MCF 10A (cell line): ENCODE measurements at regions of chrX and their contacts with region 1.

Region 1: GRCh38 chrX:76172325-76172893 is 453 bp upstream of the PBDC1 start:
- DNase-seq: no peak
- H3K4me3 Mint-ChIP-seq: peak overlapping the region; percentile 83
- H3K27ac Mint-ChIP-seq: peak overlapping the region; percentile 90
- H3K4me1 Mint-ChIP-seq: peaks cover 7% of the 10 kb centered on the region
- H3K27me3 Mint-ChIP-seq: no peaks in the 10 kb centered on the region
- CTCF ChIP-seq: no peak

Region 2: DNA sequence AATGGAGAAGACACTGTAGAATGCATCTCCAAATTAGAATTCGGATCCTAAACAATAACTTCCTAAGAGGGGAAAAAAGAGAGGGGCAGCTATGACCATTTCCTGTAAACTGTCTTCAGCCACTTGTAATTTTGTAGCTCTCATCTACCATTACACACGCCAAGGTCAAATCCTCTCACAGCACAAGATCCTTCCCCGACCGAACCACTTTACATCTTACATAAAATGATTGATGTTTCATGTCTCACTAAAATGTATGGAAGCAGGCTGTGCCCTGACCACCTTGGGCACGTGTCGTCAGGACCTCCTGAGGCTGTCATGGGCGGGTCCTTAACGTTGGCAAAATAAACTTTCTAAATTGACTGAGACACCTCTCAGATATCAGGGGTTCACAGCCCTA is 23.7 kb before region 1 on chrX:
- CTCF ChIA-PET with region 1: interaction called, 6 read pairs
- POLR2A ChIA-PET with region 1: interaction called, 21 read pairs
- intact Hi-C with region 1: no loop called
- DNase-seq: peak; percentile 47
- H3K4me3 Mint-ChIP-seq: peak overlapping the region; percentile 73
- H3K27ac Mint-ChIP-seq: peak overlapping the region; percentile 96
- H3K4me1 Mint-ChIP-seq: peaks cover 11% of the 10 kb centered on the region
- H3K27me3 Mint-ChIP-seq: no peaks in the 10 kb centered on the region
- CTCF ChIP-seq: no peak

Region 3: DNA sequence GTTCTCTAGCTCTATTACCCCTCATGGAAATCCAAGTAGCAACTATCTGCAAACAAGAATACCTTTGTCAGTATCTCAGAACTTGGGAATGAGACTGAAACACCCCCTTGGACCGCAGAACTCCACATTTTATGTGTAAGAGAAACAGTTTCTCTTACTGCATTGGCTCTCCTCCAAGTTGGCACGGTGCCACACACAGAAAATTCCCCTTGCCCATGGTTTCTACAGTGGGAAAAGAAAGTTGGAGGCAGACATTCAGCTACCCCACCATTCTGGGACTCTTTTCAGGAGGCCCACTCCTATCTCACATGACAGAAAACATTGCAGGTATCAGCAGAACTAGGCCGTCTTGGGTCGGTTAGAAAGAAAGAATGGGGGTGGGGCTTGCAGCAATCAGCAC is 226.1 kb after region 1 on chrX:
- CTCF ChIA-PET with region 1: no interaction called
- POLR2A ChIA-PET with region 1: no interaction called
- intact Hi-C with region 1: no loop called
- DNase-seq: peak; percentile 1
- H3K4me3 Mint-ChIP-seq: no peak overlapping the region
- H3K27ac Mint-ChIP-seq: no peak overlapping the region
- H3K4me1 Mint-ChIP-seq: no peaks in the 10 kb centered on the region
- H3K27me3 Mint-ChIP-seq: no peaks in the 10 kb centered on the region
- CTCF ChIP-seq: no peak